HCT116 (cell line): ENCODE measurements at regions of chr3 and their contacts with region 1.

Region 1: DNA sequence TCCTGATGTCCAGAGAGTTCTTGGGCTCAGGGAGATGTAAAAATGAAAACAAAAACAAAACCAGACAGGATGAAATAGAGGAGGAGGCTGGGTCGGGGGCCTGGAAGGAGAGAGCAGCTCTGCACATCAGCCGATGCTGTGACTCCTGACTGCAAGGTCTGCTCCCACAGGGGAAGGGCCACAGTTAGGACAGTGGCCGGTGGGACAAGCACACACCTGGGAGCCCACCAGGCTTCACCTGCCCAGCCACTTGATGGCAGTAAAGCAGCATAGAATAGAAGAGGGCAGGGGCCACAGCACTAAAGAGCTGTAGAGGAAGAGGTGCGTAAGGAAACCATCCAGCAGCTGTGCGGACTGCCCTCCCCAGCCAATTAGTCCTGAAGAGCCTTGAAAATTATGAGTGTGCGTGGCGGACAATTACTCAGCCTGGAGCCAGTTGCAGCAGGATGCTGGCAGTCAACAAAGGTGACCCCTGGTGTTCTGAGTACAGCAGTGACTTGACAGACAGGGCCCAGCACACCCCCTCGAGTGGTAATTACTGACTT is 29.8 kb downstream of the ALS2CL start:
- DNase-seq: no peak
- ATAC-seq: peak; percentile 77
- H3K4me3 ChIP-seq: no peak overlapping the region
- H3K27ac ChIP-seq: no peak overlapping the region
- H3K4me1 ChIP-seq: peaks cover 5 to 9% of the 10 kb centered on the region in 2 experiments; a peak in 3 of 4 replicates
- H3K27me3 ChIP-seq: no peaks in the 10 kb centered on the region
- CTCF ChIP-seq: peak; percentile 46 to 81 (median 55)
- POLR2A ChIP-seq: no peak
- RAD21 ChIP-seq: peak; percentile 76

Region 2: DNA sequence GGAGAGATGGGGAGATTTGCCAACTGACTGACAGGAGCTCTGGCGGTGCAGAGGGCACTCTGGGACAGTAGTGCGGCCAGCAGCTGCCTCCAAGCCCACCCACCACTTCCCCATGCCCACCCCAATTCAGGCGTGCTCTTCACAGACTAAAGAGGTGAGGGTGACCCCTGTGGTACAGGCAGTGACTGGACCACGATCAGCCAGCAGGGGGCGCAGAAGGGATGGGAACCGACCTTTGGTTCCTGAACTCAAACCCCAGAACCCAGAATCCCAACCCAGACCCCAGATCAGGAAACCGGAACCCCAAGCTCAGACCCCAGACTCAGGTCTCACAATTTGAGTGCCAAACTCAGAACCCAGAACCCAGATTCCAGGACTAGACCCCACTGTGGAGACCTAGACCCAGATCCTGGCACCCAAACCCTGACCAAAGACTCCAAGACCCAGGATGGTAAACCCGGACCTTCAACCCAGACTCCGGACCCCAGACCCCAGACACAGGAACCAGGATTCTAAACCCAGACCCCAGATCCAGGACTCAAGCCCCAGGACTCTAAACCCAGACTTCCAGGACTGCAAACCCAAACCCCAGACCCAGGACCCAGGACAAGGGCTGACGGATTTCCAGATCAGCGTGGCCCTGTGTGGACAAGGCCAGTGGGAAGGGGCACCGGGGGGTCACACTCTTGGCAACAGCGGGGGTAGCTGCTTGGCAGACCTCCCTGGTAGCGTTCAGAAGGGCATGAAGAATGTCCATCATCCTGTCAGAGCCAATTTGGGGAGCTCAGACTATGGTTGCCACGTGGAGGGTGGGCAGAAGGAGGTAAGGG is 203.3 kb after region 1 on chr3:
- CTCF ChIA-PET with region 1: no interaction called
- POLR2A ChIA-PET with region 1: no interaction called
- RAD21 ChIA-PET with region 1: no interaction called
- intact Hi-C with region 1: no loop called
- DNase-seq: no peak
- ATAC-seq: peak; percentile 86
- H3K4me3 ChIP-seq: no peak overlapping the region
- H3K27ac ChIP-seq: no peak overlapping the region
- H3K4me1 ChIP-seq: no peaks in the 10 kb centered on the region
- H3K27me3 ChIP-seq: no peaks in the 10 kb centered on the region
- CTCF ChIP-seq: peak; percentile 93 to 95 (median 94)
- POLR2A ChIP-seq: no peak
- RAD21 ChIP-seq: peak; percentile 81

Region 3: DNA sequence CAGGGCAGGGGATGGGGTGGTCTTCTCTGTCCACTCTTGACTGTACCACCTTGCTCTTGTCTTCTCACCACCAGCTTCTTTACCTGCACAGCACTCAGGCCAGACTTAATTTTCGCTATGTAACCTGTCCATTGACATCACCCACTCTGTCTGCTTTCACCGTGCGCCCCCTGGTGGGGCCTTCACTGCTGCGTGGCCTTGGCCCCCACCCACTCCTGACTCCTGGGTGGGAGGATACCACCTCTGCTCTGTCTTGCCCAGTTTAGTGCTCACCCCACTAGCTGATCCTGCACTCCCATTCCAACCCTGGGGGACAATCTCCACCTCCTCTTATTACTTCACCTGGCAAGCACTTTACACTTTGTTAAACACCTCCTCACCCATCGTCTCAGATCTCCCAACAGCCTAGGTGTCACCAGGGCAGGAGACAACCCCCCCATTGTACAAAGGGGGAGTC is 231.6 kb after region 1 on chr3:
- CTCF ChIA-PET with region 1: interaction called, 3 read pairs
- POLR2A ChIA-PET with region 1: no interaction called
- RAD21 ChIA-PET with region 1: no interaction called
- intact Hi-C with region 1: loop called (anchors 1 kb)
- DNase-seq: peak; percentile 37
- ATAC-seq: peak; percentile 67
- H3K4me3 ChIP-seq: no peak overlapping the region
- H3K27ac ChIP-seq: no peak overlapping the region
- H3K4me1 ChIP-seq: peaks cover 0 to 13% of the 10 kb centered on the region in 2 experiments; a peak in 2 of 4 replicates
- H3K27me3 ChIP-seq: no peaks in the 10 kb centered on the region
- CTCF ChIP-seq: peak; percentile 90 to 95 (median 92)
- POLR2A ChIP-seq: no peak
- RAD21 ChIP-seq: peak; percentile 88

Region 4: DNA sequence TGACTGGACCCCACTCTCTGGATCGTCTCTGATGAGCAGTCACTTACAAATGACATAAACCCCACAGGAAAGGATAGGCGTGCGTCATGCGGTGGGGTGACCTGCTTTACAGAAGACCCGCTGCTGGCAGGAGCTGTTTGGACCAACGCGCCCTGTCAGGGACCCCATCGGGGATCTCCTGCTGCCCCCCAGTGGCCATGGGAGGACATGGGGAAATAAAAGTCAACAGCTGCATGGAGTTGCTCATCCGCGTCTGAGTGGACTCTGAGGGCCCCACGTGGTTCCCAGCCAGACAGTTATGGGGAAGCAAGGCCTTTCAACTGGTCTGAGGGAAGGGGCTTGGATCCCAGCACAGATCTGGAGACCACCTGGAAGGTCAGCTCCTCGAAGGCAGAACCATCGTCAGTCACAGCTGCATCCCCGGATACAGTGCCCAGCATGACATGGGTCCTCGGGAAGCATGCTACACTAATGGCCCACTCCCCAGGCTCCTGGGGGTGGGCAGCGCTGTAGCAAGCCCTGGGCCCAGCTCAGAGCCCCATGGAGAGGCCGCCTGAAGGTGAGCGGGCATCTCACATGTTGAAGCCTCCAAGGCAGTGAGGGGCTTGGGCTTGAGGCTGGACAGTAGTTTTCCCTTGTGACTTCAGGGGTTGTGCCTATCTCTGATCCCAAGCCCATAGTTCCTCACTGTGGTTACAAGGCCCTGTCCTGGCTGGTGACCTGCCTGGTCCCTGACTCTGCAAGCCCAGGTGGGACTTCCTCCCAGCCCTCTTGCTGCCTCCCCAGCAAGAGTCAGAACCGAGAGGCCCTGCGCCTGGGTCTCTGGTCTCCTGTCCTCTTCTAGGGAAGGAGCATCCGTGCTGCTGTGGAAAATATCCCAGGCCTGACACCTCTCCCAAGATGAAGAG is 246.1 kb after region 1 on chr3:
- CTCF ChIA-PET with region 1: interaction called, 5 read pairs
- POLR2A ChIA-PET with region 1: no interaction called
- RAD21 ChIA-PET with region 1: no interaction called
- intact Hi-C with region 1: loop called (anchors 1 kb)
- DNase-seq: peak; percentile 51
- ATAC-seq: peak; percentile 92
- H3K4me3 ChIP-seq: no peak overlapping the region
- H3K27ac ChIP-seq: no peak overlapping the region
- H3K4me1 ChIP-seq: peaks cover 3 to 17% of the 10 kb centered on the region in 2 experiments; a peak in 3 of 4 replicates
- H3K27me3 ChIP-seq: no peaks in the 10 kb centered on the region
- CTCF ChIP-seq: peak; percentile 84 to 95 (median 89)
- POLR2A ChIP-seq: no peak
- RAD21 ChIP-seq: peak; percentile 95

Region 5: DNA sequence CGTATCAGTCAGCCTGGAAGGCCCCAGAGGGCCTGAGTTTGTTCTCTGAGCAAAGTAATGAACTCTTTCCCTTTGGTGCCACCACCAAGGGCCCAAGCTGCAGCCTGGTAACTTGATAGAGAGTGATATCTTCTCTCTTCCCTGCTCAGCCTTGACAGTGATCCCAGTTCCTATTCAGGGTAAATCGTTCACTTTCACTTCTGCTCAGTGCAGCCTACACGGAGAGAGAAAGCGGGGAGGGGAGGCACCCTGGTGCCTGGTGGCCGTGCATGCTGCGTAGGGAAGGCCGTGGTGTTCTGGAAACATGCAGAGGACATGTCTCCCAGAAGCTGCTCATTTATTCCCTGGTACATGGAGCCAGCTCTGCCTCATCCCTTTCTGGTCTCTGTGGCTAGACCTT is 564.0 kb after region 1 on chr3:
- CTCF ChIA-PET with region 1: no interaction called
- POLR2A ChIA-PET with region 1: no interaction called
- RAD21 ChIA-PET with region 1: no interaction called
- intact Hi-C with region 1: no loop called
- DNase-seq: no peak
- ATAC-seq: no peak
- H3K4me3 ChIP-seq: no peak overlapping the region
- H3K27ac ChIP-seq: no peak overlapping the region
- H3K4me1 ChIP-seq: no peaks in the 10 kb centered on the region
- H3K27me3 ChIP-seq: no peaks in the 10 kb centered on the region
- CTCF ChIP-seq: no peak
- POLR2A ChIP-seq: no peak
- RAD21 ChIP-seq: no peak